ENCODE measurements at regions of chr7 and their contacts with region 1.

Region 1: DNA sequence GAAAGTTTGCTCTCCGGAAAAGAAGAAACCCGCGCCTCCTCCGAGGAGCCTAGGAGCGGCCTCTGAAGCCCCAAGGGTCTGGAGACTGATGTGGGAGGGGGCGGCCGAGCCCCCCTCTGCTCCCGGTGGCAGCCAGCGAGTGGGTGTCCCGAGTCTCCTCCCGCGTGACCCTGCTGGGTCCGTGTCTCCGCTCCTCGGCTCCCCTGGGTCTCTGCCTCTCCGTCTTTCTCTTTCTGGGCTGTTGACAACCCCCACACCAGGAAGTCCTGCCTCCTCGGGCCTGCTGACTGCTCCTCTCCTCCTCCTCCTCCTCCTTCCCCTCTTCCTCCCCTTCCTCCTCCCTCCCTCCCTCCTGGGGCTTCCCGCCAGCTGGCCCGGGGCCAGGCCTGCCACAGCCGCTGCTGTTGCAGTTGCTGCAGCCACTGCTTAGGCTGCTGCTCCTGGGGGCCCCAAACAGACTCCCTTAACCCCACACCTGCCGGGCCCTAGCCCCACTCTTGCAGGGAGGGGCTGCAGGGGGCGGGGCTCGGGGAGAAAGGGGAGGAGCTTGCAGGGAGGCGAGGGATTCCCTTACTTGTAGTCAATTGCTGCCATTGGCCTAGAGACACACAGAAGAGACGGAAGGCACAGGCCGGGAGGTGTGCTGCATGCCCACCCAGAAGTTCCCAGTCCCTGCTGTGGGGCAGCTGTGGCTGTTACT is at the start of gene TSC22D4:
- DNase-seq: peak; percentile 95 to 98 (median 95)
- ATAC-seq: peak; percentile 82 to 92 (median 92)
- H3K4me3 ChIP-seq: peak within 1 kb of the TSS; percentile 66 to 100 (median 98)
- H3K27ac ChIP-seq: peak within 1 kb of the TSS; percentile 81 to 99 (median 96)
- H3K4me1 ChIP-seq: peaks cover 0 to 62% (median 42%) of the 10 kb centered on the region in 12 donors
- H3K27me3 ChIP-seq: no peaks in the 10 kb centered on the region
- CTCF ChIP-seq: peak in 1 of 12 donors; percentile 10
- POLR2A ChIP-seq: peak; percentile 57 to 88
- total RNA-seq, gene TSC22D4: 41.8 to 55.5 (median 49.0) TPM

Region 2: GRCh38 chr7:99794585-99795502 is 684.3 kb before region 1 on chr7:
- intact Hi-C with region 1: no loop called
- DNase-seq: no peak
- ATAC-seq: peak in 1 of 4 donors; percentile 71
- H3K4me3 ChIP-seq: no peak overlapping the region
- H3K27ac ChIP-seq: no peak overlapping the region
- H3K4me1 ChIP-seq: no peaks in the 10 kb centered on the region
- H3K27me3 ChIP-seq: no peaks in the 10 kb centered on the region
- CTCF ChIP-seq: no peak
- POLR2A ChIP-seq: no peak

Region 3: GRCh38 chr7:100429637-100430492 is 49.3 kb before region 1 on chr7 and contains the start of gene MEPCE:
- intact Hi-C with region 1: no loop called
- DNase-seq: peak; percentile 96 to 98 (median 98)
- ATAC-seq: peak; percentile 63 to 78 (median 74)
- H3K4me3 ChIP-seq: peak within 1 kb of the TSS; percentile 66 to 99 (median 90)
- H3K27ac ChIP-seq: peak within 1 kb of the TSS; percentile 96 to 100 (median 99)
- H3K4me1 ChIP-seq: peaks cover 0 to 52% (median 34%) of the 10 kb centered on the region in 12 donors
- H3K27me3 ChIP-seq: no peaks in the 10 kb centered on the region
- CTCF ChIP-seq: peak in 2 of 12 donors; percentile 2 to 5
- POLR2A ChIP-seq: no peak
- total RNA-seq, gene MEPCE: 15.8 to 30.3 (median 21.5) TPM

Region 4: GRCh38 chr7:100545360-100546128 is 66.4 kb after region 1 on chr7:
- intact Hi-C with region 1: loop called in 2 of 10 experiments (anchors 2 to 5 kb)
- DNase-seq: peak in 2 of 5 donors; percentile 41 to 46
- ATAC-seq: peak; percentile 83 to 85 (median 85)
- H3K4me3 ChIP-seq: no peak overlapping the region
- H3K27ac ChIP-seq: peak overlapping the region; percentile 77 to 92 (median 88)
- H3K4me1 ChIP-seq: peaks cover 10 to 83% (median 48%) of the 10 kb centered on the region in 12 donors
- H3K27me3 ChIP-seq: no peaks in the 10 kb centered on the region
- CTCF ChIP-seq: no peak
- POLR2A ChIP-seq: no peak

Region 5: GRCh38 chr7:100556541-100556940 is 77.4 kb after region 1 on chr7:
- intact Hi-C with region 1: loop called in 1 of 10 experiments (anchors 5 kb)
- DNase-seq: no peak
- ATAC-seq: no peak
- H3K4me3 ChIP-seq: no peak overlapping the region
- H3K27ac ChIP-seq: no peak overlapping the region
- H3K4me1 ChIP-seq: peaks cover 0 to 7% (median 1%) of the 10 kb centered on the region in 12 donors
- H3K27me3 ChIP-seq: no peaks in the 10 kb centered on the region
- CTCF ChIP-seq: no peak
- POLR2A ChIP-seq: no peak